B cell (primary cell): ENCODE measurements at regions of chr3 and their contacts with region 1.

Region 1: GRCh38 chr3:71247221-71247976 is 336.1 kb downstream of the FOXP1 start:
- DNase-seq: no peak
- ATAC-seq: no peak
- H3K4me3 ChIP-seq: no peak overlapping the region
- H3K4me3 Mint-ChIP-seq: no peak overlapping the region
- H3K27ac ChIP-seq: peak overlapping the region in 1 of 2 donors; percentile 44
- H3K27ac Mint-ChIP-seq: peak overlapping the region; percentile 70
- H3K4me1 ChIP-seq: peaks cover 29 to 32% of the 10 kb centered on the region in 2 donors
- H3K4me1 Mint-ChIP-seq: peaks cover 70% of the 10 kb centered on the region
- H3K27me3 ChIP-seq: no peaks in the 10 kb centered on the region
- H3K27me3 Mint-ChIP-seq: no peaks in the 10 kb centered on the region
- CTCF ChIP-seq: no peak

Region 2: GRCh38 chr3:71299160-71299559 is 51.8 kb after region 1 on chr3:
- CTCF ChIA-PET with region 1: interaction called, 3 read pairs
- POLR2A ChIA-PET with region 1: no interaction called
- intact Hi-C with region 1: loop called (anchors 10 kb)
- DNase-seq: no peak
- ATAC-seq: no peak
- H3K4me3 ChIP-seq: no peak overlapping the region
- H3K4me3 Mint-ChIP-seq: no peak overlapping the region
- H3K27ac ChIP-seq: peak overlapping the region in 1 of 2 donors; percentile 2
- H3K27ac Mint-ChIP-seq: peak overlapping the region; percentile 53
- H3K4me1 ChIP-seq: peaks cover 30 to 47% of the 10 kb centered on the region in 2 donors
- H3K4me1 Mint-ChIP-seq: peaks cover 72% of the 10 kb centered on the region
- H3K27me3 ChIP-seq: no peaks in the 10 kb centered on the region
- H3K27me3 Mint-ChIP-seq: no peaks in the 10 kb centered on the region
- CTCF ChIP-seq: no peak

Region 3: GRCh38 chr3:71369701-71370391 is 122.4 kb after region 1 on chr3:
- CTCF ChIA-PET with region 1: no interaction called
- POLR2A ChIA-PET with region 1: no interaction called
- intact Hi-C with region 1: no loop called
- DNase-seq: no peak
- ATAC-seq: no peak
- H3K4me3 ChIP-seq: no peak overlapping the region
- H3K4me3 Mint-ChIP-seq: no peak overlapping the region
- H3K27ac ChIP-seq: no peak overlapping the region
- H3K27ac Mint-ChIP-seq: peak overlapping the region; percentile 46
- H3K4me1 ChIP-seq: peaks cover 36 to 45% of the 10 kb centered on the region in 2 donors
- H3K4me1 Mint-ChIP-seq: peaks cover 62% of the 10 kb centered on the region
- H3K27me3 ChIP-seq: no peaks in the 10 kb centered on the region
- H3K27me3 Mint-ChIP-seq: no peaks in the 10 kb centered on the region
- CTCF ChIP-seq: no peak

Region 4: DNA sequence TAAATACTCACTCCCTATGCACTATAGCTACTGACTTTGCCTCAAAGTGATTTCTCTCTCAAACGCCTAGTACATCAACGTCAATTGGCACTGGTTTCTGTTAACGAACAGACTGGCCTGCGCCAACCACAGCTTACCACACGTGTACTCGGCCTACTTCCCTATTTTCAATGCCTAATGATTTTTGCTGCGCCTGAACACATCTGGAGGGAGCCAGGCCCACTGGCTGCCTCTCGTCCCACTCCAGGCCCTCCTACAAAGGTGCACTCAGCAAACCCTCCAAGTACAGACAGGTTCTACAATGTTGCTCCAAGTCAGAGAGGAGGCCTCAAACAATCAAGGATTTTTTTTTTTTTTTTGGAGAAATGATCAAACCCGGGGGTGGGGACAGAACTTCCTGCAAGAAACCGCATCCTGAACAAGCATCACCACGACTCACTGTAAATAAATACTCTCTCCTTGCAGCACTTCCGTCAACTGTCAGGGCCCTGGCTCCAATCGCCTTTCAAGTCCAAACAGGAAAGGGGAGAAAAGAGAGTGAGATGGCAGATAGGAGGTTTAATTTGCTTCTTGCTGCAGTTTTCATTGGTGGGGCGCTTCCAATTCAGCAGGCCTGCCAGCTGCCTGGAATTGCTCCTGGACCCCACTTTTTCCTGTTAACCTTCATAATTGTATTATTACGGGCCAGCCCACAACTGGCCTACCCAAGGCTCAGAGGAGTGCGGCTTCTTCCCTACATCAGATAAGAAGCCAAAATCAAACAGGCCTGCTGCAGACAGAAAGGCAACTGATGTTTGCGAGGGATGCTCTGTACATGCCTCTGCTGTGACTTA is 196.8 kb after region 1 on chr3:
- CTCF ChIA-PET with region 1: no interaction called
- POLR2A ChIA-PET with region 1: no interaction called
- intact Hi-C with region 1: no loop called
- DNase-seq: peak; percentile 92
- ATAC-seq: peak; percentile 76
- H3K4me3 ChIP-seq: peak overlapping the region in 3 of 5 experiments; percentile 3 to 22 (median 6)
- H3K4me3 Mint-ChIP-seq: peak overlapping the region; percentile 70
- H3K27ac ChIP-seq: peak overlapping the region; percentile 90 to 92
- H3K27ac Mint-ChIP-seq: peak overlapping the region; percentile 96
- H3K4me1 ChIP-seq: peaks cover 83 to 85% of the 10 kb centered on the region in 2 donors
- H3K4me1 Mint-ChIP-seq: peaks cover 82% of the 10 kb centered on the region
- H3K27me3 ChIP-seq: no peaks in the 10 kb centered on the region
- H3K27me3 Mint-ChIP-seq: no peaks in the 10 kb centered on the region
- CTCF ChIP-seq: no peak